HepG2 (cell line): ENCODE measurements at regions of chr1 and their contacts with region 1.

Region 1: DNA sequence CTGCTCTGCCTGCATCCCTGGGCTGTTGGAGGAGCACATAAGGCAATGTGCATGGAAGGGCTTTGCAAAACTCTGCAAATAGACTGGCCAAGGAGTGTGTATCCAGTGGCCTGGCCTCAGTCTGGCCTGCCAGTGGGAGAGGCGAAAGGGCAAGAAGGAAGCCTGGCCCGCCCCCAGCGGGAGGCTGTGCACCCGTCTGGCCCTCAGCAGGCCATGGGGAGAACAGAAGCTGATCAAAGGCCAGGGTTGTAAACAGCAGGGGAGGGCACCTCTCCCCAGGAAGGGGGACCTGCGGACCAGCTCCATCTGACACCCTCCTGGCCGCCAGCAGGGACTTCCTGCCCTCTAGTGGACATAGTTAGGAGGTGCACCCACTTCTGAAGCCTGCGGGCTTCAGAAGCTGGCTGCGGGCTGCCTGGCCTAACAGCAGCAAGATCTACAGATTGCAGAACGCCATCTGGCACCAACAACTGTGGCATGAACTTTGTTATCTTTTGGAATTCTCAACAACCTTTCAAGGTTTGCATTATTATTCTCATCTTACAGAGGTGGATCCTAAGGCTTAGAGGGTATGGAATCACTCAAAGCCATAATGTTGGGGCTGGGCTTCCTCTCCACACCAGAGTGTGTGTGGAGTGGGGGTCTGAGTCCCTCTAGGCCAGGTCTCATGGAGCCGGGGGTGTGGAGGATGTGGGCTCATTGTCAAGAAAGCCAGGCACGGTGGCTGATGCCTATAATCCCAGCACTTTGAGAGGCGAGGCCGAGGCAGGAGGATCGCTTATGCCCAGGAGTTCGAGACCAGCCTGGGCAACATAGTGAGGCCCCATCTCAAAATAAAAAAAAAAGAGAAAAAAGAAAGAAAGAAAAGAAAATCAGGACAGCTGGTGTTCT is 18.9 kb upstream of the CDK18 start:
- DNase-seq: peak; percentile 93
- ATAC-seq: peak; percentile 98
- H3K4me3 ChIP-seq: no peak overlapping the region
- H3K27ac ChIP-seq: no peak overlapping the region
- H3K4me1 ChIP-seq: peaks cover 23% of the 10 kb centered on the region
- H3K27me3 ChIP-seq: peaks cover 7 to 20% of the 10 kb centered on the region in 2 experiments; a peak in 3 of 5 replicates
- CTCF ChIP-seq: peak; percentile 98
- EP300 ChIP-seq: peak in 1 of 2 experiments; percentile 39; a peak in 1 of 4 replicates
- POLR2A ChIP-seq: no peak
- RAD21 ChIP-seq: peak; percentile 99

Region 2: GRCh38 chr1:205003393-205004131 is 482.0 kb before region 1 on chr1:
- CTCF ChIA-PET with region 1: no interaction called
- POLR2A ChIA-PET with region 1: no interaction called
- in situ Hi-C with region 1: no loop called
- intact Hi-C with region 1: no loop called
- DNase-seq: no peak
- ATAC-seq: no peak
- H3K4me3 ChIP-seq: no peak overlapping the region
- H3K27ac ChIP-seq: no peak overlapping the region
- H3K4me1 ChIP-seq: no peaks in the 10 kb centered on the region
- H3K27me3 ChIP-seq: peaks cover 2 to 61% of the 10 kb centered on the region in 2 experiments; a peak in 4 of 5 replicates
- CTCF ChIP-seq: no peak
- EP300 ChIP-seq: no peak
- POLR2A ChIP-seq: no peak
- RAD21 ChIP-seq: no peak

Region 3: GRCh38 chr1:205273551-205273982 is 212.0 kb before region 1 on chr1:
- CTCF ChIA-PET with region 1: no interaction called
- POLR2A ChIA-PET with region 1: no interaction called
- in situ Hi-C with region 1: no loop called
- intact Hi-C with region 1: no loop called
- DNase-seq: peak; percentile 65
- ATAC-seq: peak; percentile 86
- H3K4me3 ChIP-seq: no peak overlapping the region
- H3K27ac ChIP-seq: no peak overlapping the region
- H3K4me1 ChIP-seq: peaks cover 32% of the 10 kb centered on the region
- H3K27me3 ChIP-seq: peaks cover 2 to 28% of the 10 kb centered on the region in 2 experiments; a peak in 4 of 5 replicates
- CTCF ChIP-seq: peak; percentile 98
- EP300 ChIP-seq: no peak; a peak in 1 of 4 replicates
- POLR2A ChIP-seq: no peak
- RAD21 ChIP-seq: peak; percentile 99

Region 4: GRCh38 chr1:205354259-205354904 is 131.2 kb before region 1 on chr1:
- CTCF ChIA-PET with region 1: interaction called, 24 read pairs
- POLR2A ChIA-PET with region 1: interaction called, 4 read pairs
- in situ Hi-C with region 1: no loop called
- intact Hi-C with region 1: loop called (anchors 1 kb)
- DNase-seq: peak; percentile 29
- ATAC-seq: peak; percentile 41; the same call in 1 of the 3 replicates
- H3K4me3 ChIP-seq: no peak overlapping the region
- H3K27ac ChIP-seq: no peak overlapping the region
- H3K4me1 ChIP-seq: no peaks in the 10 kb centered on the region
- H3K27me3 ChIP-seq: peaks cover 7 to 43% of the 10 kb centered on the region in 2 experiments; a peak in 4 of 5 replicates
- CTCF ChIP-seq: peak; percentile 68
- EP300 ChIP-seq: no peak
- POLR2A ChIP-seq: no peak
- RAD21 ChIP-seq: 0 out of 2 replicates have a peak, but pooled peaks have one; percentile 9

Region 5: DNA sequence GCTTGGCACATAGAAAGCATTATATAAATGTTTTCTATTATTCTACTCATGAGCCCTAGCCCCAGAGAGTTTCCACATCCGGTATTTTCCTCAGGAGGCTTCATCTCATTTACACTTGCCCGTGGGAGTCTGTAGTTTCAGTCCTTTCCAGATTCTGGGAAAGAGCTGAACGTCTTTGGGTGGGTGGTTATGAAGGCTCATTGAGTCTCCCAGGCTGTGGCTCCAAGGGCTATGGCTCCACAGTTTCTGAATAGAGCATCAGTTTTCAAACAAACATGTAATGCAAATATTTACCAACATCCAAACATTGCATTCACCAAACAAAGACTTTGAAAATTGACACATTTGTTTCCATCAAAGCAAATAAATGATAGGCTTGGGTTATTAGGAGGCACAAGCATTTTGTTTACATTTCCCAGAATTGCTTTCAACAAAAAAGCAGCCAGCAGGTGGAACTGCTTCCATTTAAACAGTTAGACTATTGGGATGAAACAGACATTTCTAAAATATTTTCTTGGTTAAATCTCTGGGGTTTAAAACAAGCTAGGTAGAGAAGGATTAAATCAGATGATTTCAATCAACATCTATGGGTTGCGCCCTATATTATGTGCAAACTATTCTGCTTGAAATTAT is 62.5 kb before region 1 on chr1:
- CTCF ChIA-PET with region 1: interaction called, 4 read pairs
- POLR2A ChIA-PET with region 1: no interaction called
- in situ Hi-C with region 1: no loop called
- intact Hi-C with region 1: loop called (anchors 1 kb)
- DNase-seq: no peak
- ATAC-seq: no peak
- H3K4me3 ChIP-seq: no peak overlapping the region
- H3K27ac ChIP-seq: no peak overlapping the region
- H3K4me1 ChIP-seq: no peaks in the 10 kb centered on the region
- H3K27me3 ChIP-seq: peaks cover 0 to 55% of the 10 kb centered on the region in 2 experiments; a peak in 3 of 5 replicates
- CTCF ChIP-seq: no peak
- EP300 ChIP-seq: no peak
- POLR2A ChIP-seq: no peak
- RAD21 ChIP-seq: no peak

Region 6: DNA sequence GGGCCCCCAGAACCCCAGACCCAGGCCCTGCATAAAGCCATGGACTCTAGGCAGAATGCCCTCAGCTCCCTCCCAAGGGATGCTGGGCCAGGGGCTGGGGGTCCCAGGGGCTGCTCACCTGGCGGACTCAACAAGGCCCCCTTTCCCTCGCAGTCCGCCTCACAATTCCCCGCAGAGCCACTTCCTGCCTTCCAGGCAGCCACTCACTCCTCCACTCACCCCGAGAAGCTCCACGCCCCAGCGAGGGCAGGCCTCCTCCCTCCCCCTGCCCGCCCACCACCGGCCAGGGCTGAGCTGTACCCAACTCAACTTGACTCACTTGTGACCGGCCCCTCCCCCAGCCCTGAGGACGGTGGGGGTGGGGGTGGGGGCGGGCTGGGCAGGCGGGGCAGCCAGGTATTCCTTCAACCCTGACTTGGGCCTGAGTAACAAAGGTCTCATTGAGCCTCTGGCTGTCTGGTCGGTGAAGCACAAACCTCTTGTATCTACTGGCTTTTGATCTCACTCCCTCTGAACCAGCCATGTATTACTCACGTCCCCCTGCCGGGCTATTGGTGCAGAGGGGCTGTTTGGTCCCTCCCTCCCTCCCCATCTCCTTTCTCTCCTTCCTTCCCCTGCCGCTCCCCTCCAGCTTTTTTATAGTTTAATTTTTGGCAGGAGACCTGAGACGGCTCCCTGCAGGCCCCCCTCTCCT is 35.7 kb before region 1 on chr1:
- CTCF ChIA-PET with region 1: no interaction called
- POLR2A ChIA-PET with region 1: interaction called, 20 read pairs
- in situ Hi-C with region 1: no loop called
- intact Hi-C with region 1: loop called (anchors 2 kb)
- DNase-seq: peak; percentile 99
- ATAC-seq: peak; percentile 88
- H3K4me3 ChIP-seq: peak overlapping the region; percentile 68 to 81 (median 71)
- H3K27ac ChIP-seq: peak overlapping the region; percentile 89
- H3K4me1 ChIP-seq: peaks cover 70% of the 10 kb centered on the region
- H3K27me3 ChIP-seq: peaks cover 0 to 24% of the 10 kb centered on the region in 2 experiments; a peak in 2 of 5 replicates
- CTCF ChIP-seq: peak; percentile 22; the same call in 1 of the 2 replicates
- EP300 ChIP-seq: peak in 1 of 2 experiments; percentile 21; a peak in 1 of 4 replicates
- POLR2A ChIP-seq: peak; percentile 46 to 77; a peak in 3 of 4 replicates
- RAD21 ChIP-seq: no peak